Activated T-helper 1 cell treated with anti-CD3 and anti-CD28 coated beads, Interleukin-12 subunit alpha, Interleukin-12 subunit beta, Interleukin-2, Interleukin-4 antibody, amounts not matched to agents 30 ng/mL and 10 ng/mL and 1 ng/mL, durations not matched to agents 14 hours and 24 hours and 36 hours (primary cell): ENCODE measurements at regions of chr1 and their contacts with region 1.

Region 1: GRCh38 chr1:19882111-19883071 is at the start of gene OTUD3:
- DNase-seq: peak; percentile 95
- H3K4me3 Mint-ChIP-seq: peak within 1 kb of the TSS; percentile 90
- H3K27ac Mint-ChIP-seq: peak within 1 kb of the TSS; percentile 52
- H3K4me1 Mint-ChIP-seq: peaks cover 31% of the 10 kb centered on the region
- H3K27me3 Mint-ChIP-seq: peaks cover 2% of the 10 kb centered on the region
- total RNA-seq, gene OTUD3: 10.2 and 16.1 TPM in 2 replicates

Region 2: DNA sequence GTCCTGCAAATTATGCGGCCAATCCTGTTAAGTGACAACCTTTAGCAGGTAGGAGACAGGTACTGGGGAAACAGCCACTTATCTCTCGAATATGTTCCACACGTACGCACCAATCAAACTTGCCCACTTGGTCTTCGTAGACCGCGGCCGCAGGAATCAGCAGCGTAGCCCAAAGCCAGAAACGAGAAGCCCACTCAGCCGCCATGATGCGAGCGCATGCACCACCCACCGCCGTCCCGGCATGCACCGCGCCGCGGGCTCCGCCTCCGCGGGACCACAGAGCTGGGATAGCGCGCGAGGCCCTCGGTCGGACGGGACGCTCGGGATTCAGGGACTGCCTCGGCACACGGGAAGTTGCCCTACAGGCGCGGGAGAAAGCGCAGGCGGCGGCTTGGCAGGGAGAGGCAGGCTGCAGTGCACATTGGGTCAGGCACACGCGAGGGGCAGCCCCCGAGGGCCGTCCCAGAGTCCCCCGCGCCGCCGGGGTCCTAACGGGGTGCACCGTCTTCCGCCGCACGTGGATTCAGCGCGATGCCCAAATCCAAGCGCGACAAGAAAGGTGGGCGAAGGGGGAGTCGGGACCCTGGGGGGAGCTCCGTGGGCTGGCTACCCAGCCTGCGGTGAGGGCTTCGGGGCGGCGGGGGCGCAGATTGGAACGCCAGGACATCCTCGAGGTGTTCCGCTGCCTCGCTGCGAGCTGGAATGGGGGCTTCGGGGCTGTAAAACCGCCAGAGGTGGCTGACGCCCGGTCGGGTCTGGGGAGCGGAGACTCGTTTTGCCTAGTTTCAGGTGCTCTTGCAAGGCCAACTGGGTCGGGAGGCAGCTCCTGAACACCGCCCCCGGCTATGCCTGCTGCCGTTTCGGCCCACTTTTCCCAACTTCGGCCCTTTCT is 630.8 kb before region 1 on chr1 and contains the starts of genes EMC1 and MRTO4:
- intact Hi-C with region 1: loop called (anchors 10 kb)
- DNase-seq: peak; percentile 87
- H3K4me3 Mint-ChIP-seq: peak within 1 kb of the TSS; percentile 99
- H3K27ac Mint-ChIP-seq: peak within 1 kb of the TSS; percentile 98
- H3K4me1 Mint-ChIP-seq: peaks cover 22% of the 10 kb centered on the region
- H3K27me3 Mint-ChIP-seq: no peaks in the 10 kb centered on the region
- total RNA-seq, gene EMC1: 63.9 and 78.3 TPM in 2 replicates
- total RNA-seq, gene MRTO4: 134 and 137 TPM in 2 replicates

Region 3: GRCh38 chr1:19284896-19285295 is 597.5 kb before region 1 on chr1:
- intact Hi-C with region 1: no loop called
- DNase-seq: no peak
- H3K4me3 Mint-ChIP-seq: no peak overlapping the region
- H3K27ac Mint-ChIP-seq: no peak overlapping the region
- H3K4me1 Mint-ChIP-seq: no peaks in the 10 kb centered on the region
- H3K27me3 Mint-ChIP-seq: peaks cover 2% of the 10 kb centered on the region

Region 4: GRCh38 chr1:19715334-19716203 is 166.8 kb before region 1 on chr1:
- intact Hi-C with region 1: loop called (anchors 1 kb)
- DNase-seq: peak; percentile 75
- H3K4me3 Mint-ChIP-seq: no peak overlapping the region
- H3K27ac Mint-ChIP-seq: no peak overlapping the region
- H3K4me1 Mint-ChIP-seq: peaks cover 17% of the 10 kb centered on the region
- H3K27me3 Mint-ChIP-seq: no peaks in the 10 kb centered on the region

Region 5: GRCh38 chr1:19799877-19800804 is 82.2 kb before region 1 on chr1 and contains the start of gene TMCO4:
- intact Hi-C with region 1: loop called (anchors 2 kb)
- DNase-seq: peak; percentile 34
- H3K4me3 Mint-ChIP-seq: peak within 1 kb of the TSS; percentile 86
- H3K27ac Mint-ChIP-seq: peak within 1 kb of the TSS; percentile 91
- H3K4me1 Mint-ChIP-seq: peaks cover 28% of the 10 kb centered on the region
- H3K27me3 Mint-ChIP-seq: peaks cover 15% of the 10 kb centered on the region
- total RNA-seq, gene TMCO4: 14.0 and 15.1 TPM in 2 replicates

Region 6: DNA sequence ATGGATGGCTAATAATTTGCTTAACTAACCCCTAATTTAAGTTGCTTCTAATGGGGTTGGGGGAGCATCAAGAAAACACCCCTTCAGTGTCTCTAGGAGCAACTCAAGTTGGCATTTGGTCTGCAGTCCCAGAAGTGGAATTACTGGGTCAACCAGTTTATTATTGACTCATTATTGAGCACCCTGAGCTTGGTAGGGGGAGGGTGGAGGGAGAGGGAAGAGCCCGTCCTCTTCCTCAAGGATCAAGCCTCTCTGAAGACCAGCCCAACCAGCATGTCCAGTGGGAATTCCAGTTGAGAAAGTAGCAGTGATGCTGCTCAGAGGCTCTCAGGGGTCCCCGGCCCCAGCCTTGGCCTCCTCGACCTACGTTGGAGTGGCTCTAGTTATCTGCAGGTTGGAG is 254.7 kb after region 1 on chr1:
- intact Hi-C with region 1: no loop called
- DNase-seq: no peak
- H3K4me3 Mint-ChIP-seq: no peak overlapping the region
- H3K27ac Mint-ChIP-seq: no peak overlapping the region
- H3K4me1 Mint-ChIP-seq: no peaks in the 10 kb centered on the region
- H3K27me3 Mint-ChIP-seq: peaks cover 11% of the 10 kb centered on the region

Region 7: GRCh38 chr1:20185834-20186782 is 303.7 kb after region 1 on chr1 and contains the starts of genes PLA2G2C and UBXN10:
- intact Hi-C with region 1: loop called (anchors 1 kb)
- DNase-seq: peak; percentile 64
- H3K4me3 Mint-ChIP-seq: peak within 1 kb of the TSS; percentile 86
- H3K27ac Mint-ChIP-seq: peak within 1 kb of the TSS; percentile 90
- H3K4me1 Mint-ChIP-seq: peaks cover 63% of the 10 kb centered on the region
- H3K27me3 Mint-ChIP-seq: peaks cover 11% of the 10 kb centered on the region
- total RNA-seq, gene PLA2G2C: 0.44 and 0.65 TPM in 2 replicates
- total RNA-seq, gene UBXN10: 2.5 and 2.9 TPM in 2 replicates

Region 8: GRCh38 chr1:20661207-20662109 is 779.1 kb after region 1 on chr1 and contains the start of gene DDOST:
- intact Hi-C with region 1: loop called (anchors 10 kb)
- DNase-seq: peak; percentile 94
- H3K4me3 Mint-ChIP-seq: peak within 1 kb of the TSS; percentile 97
- H3K27ac Mint-ChIP-seq: peak within 1 kb of the TSS; percentile 97
- H3K4me1 Mint-ChIP-seq: peaks cover 45% of the 10 kb centered on the region
- H3K27me3 Mint-ChIP-seq: no peaks in the 10 kb centered on the region
- total RNA-seq, gene DDOST: 167 and 174 TPM in 2 replicates